K562 (cell line): ENCODE measurements at regions of chr6 and their contacts with region 1.

Region 1: DNA sequence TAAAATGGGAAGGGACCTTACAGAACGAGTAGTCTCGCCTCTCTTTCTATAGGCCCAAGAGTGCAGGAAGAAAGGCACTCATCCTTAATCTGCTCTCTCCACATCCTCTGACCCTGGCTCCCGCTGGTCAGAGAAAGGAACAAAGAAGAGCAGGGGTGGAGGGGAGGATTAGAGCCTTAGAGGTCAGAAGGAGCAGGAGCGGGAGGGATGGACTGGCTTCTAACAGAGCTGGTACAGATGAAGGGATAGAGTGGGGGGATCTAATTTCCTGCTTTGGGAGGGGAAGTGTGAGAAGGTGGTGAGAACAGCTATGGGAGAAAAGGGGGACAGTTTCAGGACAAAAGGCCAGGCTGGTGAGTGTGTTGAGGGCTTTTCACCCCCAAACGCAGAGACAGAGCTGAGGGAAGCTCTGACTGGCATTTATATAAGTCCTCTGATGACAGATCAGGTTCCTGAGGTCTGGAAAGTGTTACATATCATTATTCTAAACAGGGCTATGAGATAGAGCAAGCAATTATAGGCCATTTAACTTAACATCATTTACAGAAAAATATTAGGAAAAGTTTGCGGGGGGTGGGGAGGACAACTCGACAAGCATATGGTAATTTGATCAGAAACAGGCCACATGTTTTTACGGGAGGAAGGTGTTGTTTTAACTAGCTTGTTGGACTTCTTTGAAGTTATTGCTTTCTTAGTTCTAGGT is 111.1 kb downstream of the FOXC1 start:
- DNase-seq: no peak
- ATAC-seq: no peak
- H3K4me3 ChIP-seq: no peak overlapping the region
- H3K27ac ChIP-seq: no peak overlapping the region
- H3K4me1 ChIP-seq: no peaks in the 10 kb centered on the region; a peak in 1 of 5 replicates
- H3K27me3 ChIP-seq: peaks cover 0 to 9% of the 10 kb centered on the region in 2 experiments; a peak in 3 of 5 replicates
- CTCF ChIP-seq: no peak
- EP300 ChIP-seq: no peak
- POLR2A ChIP-seq: no peak
- RAD21 ChIP-seq: no peak

Region 2: GRCh38 chr6:1709234-1709641 is 11.5 kb before region 1 on chr6:
- CTCF ChIA-PET with region 1: no interaction called
- POLR2A ChIA-PET with region 1: interaction called, 14 read pairs
- in situ Hi-C with region 1: no loop called
- intact Hi-C with region 1: no loop called
- DNase-seq: no peak
- ATAC-seq: no peak
- H3K4me3 ChIP-seq: no peak overlapping the region
- H3K27ac ChIP-seq: no peak overlapping the region
- H3K4me1 ChIP-seq: peaks cover under 1 to 1% of the 10 kb centered on the region in 2 experiments; a peak in 4 of 5 replicates
- H3K27me3 ChIP-seq: peaks cover 15 to 28% of the 10 kb centered on the region in 2 experiments
- CTCF ChIP-seq: no peak
- EP300 ChIP-seq: no peak
- POLR2A ChIP-seq: no peak
- RAD21 ChIP-seq: no peak